ENCODE measurements at regions of chr1 and their contacts with region 1.

Region 1: DNA sequence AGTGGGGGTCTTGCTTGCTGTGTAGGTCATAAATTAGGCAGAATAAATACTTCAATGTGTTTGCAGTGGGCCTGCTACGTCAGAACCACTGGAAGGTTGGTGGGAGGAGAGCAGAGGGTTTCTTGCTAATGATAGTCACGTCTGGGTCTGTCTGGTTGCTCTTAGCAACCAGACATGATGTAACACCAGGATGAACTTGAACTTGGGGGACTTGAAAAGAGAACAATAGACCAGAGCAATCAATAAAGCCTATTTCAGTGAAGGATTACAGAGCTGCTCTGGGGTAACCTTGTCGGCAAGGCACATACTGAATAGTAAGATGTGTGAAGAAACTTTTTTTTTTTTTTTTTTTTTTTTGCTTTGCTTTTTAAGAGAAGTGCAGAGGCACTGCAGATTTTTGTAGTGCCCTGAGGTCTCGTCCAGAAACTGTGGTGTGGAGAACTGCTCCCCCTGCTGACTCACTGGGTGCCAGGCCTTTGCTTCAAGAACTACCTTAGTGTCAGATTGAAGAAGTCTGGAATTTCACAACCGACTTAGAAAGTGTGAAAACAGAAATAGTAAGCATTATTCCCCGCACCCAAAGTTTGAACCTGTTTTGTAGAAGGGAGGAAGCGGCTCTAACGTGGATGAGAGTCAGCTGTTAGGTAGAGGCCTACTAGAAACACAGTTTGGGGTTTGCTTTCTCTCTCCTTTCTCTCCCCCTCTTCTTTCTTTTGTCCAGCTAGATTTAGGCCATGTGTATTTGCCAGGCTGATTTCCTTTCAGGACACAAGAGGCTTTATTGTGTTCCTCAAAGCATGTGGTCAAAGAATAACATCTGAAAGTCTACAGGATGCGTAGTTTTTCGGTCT is 271.6 kb downstream of the TM2D1 start:
- DNase-seq: peak; percentile 93 to 94
- ATAC-seq: peak; percentile 89
- H3K4me3 ChIP-seq: no peak overlapping the region
- H3K27ac ChIP-seq: peak overlapping the region; percentile 95
- H3K4me1 ChIP-seq: peaks cover 3 to 11% of the 10 kb centered on the region in 2 donors
- H3K27me3 ChIP-seq: no peaks in the 10 kb centered on the region

Region 2: DNA sequence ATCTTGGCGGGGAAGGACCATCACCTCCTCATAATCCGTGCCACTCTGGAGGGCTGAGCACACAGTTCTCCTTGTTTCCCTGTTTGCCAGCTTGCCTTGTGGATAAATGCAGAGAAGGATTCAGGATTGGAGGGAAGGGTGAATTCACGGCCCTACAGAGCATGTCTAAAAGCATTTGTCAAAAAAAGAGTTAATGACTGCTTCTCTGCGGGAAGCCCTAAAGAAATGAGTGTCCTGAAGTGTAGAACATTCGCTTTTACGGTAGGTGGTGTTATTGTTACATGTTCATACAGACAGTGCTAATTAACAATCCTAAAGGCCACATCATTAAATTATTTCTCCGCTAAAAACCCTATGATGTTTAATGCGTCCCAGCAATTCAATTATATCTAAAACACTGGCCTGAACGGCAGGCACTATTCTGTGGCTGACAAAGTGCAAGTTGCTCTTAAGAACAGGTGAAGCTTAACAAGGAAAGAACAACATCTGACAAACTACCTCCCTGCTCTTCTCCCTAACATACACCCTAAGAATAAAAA is 483.3 kb before region 1 on chr1:
- intact Hi-C with region 1: loop called in 1 of 2 experiments (anchors 5 kb)
- DNase-seq: no peak
- ATAC-seq: peak; percentile 78
- H3K4me3 ChIP-seq: no peak overlapping the region
- H3K27ac ChIP-seq: peak overlapping the region; percentile 49 to 74
- H3K4me1 ChIP-seq: peaks cover 6 to 12% of the 10 kb centered on the region in 2 donors
- H3K27me3 ChIP-seq: no peaks in the 10 kb centered on the region

Region 3: GRCh38 chr1:61056573-61057439 is 396.5 kb before region 1 on chr1:
- intact Hi-C with region 1: loop called in 1 of 2 experiments (anchors 2 kb)
- DNase-seq: peak; percentile 81
- ATAC-seq: peak; percentile 69
- H3K4me3 ChIP-seq: peak overlapping the region; percentile 58 to 97
- H3K27ac ChIP-seq: peak overlapping the region; percentile 57 to 70
- H3K4me1 ChIP-seq: peaks cover 0 to 11% of the 10 kb centered on the region in 2 donors
- H3K27me3 ChIP-seq: no peaks in the 10 kb centered on the region

Region 4: GRCh38 chr1:61170328-61171238 is 282.8 kb before region 1 on chr1:
- intact Hi-C with region 1: loop called in 1 of 2 experiments (anchors 10 kb)
- DNase-seq: no peak
- ATAC-seq: no peak
- H3K4me3 ChIP-seq: no peak overlapping the region
- H3K27ac ChIP-seq: peak overlapping the region; percentile 79 to 86
- H3K4me1 ChIP-seq: peaks cover 9 to 19% of the 10 kb centered on the region in 2 donors
- H3K27me3 ChIP-seq: no peaks in the 10 kb centered on the region

Region 5: DNA sequence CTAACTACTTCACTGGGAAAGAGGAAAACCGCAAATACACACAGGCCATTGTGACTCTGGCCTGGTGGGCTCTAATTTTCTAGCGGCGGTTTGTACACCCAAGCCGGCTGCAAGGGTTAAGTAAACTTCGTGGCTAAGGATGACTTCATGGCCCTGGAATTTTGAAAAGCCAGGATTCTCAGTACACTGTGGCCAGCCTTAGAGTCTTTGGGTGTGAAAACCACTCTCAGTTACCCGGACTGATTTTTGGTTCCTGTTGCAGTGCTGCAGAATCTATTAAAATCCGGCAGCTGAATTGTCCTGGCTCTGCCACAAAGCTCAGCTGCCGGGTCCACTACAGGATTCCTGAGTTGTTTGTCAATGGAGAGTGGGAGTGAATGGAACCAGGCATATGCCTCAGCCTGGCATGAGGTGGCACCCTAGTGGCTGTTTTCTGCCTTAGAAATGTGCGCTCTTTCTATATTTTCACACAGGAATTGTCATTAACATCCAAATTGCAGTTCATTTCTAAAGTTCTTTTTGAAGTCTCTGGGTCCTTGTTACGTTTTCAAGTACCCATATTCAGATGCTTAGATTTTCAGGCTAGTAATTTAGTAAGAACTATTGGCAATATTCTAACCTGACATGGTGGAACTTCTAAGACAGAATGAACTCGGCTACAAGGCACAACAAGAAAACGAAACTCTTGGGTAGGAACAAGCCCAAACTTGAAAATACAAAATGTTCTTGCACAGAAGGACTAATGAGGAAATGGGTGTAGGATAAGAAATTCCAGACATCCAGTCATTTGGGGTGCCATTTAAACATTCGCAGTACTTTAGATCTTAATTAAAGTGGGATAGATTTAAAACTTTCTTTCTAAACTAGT is 115.1 kb before region 1 on chr1:
- intact Hi-C with region 1: loop called in 1 of 2 experiments (anchors 5 kb)
- DNase-seq: peak; percentile 84
- ATAC-seq: peak; percentile 91
- H3K4me3 ChIP-seq: peak overlapping the region in 1 of 2 donors; percentile 48
- H3K27ac ChIP-seq: peak overlapping the region; percentile 94 to 99
- H3K4me1 ChIP-seq: peaks cover 4% of the 10 kb centered on the region in 2 donors
- H3K27me3 ChIP-seq: no peaks in the 10 kb centered on the region

Region 6: DNA sequence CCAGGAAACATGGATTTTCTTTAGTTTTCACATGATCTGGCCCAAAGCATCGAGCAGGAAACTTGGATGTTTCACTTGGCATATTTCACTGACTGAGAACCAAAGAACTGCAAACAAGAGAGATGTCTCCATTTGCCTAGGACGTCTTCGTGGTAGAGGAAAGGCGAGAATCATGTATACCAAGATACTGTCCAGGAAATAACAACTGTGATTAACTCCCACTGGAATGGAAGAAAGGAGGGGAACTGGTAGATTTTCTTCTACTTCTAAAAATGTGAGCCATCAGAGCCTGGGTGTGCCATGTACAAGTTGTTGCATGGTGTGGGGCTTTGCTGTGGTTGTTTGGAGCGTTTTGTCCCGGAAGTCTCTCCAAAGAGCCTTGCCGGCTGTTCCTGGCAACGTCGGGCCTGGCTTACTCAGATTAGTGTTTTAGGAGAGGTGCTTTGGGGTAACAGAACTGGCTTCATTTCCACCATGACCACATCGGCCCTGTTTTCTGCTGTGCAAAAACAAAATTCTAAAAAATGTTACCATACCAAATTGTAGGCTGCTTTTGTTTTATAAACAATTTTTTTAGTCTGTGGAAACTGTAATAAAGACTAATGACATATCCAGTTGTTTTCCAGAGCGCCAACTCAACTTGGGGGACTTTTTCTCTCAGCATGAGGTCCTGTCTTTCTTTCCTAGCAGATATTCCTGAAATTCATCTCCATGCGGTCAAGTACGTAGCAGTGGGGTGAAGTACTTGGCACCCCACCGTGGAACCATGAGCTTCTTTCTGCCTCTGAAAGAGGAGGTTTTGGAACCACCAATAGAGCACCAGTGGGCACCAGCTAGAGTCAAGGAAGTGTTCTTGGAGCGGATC is 153.3 kb after region 1 on chr1:
- intact Hi-C with region 1: no loop called
- DNase-seq: peak; percentile 87 to 90
- ATAC-seq: peak; percentile 92
- H3K4me3 ChIP-seq: no peak overlapping the region
- H3K27ac ChIP-seq: peak overlapping the region; percentile 94 to 99
- H3K4me1 ChIP-seq: peaks cover 2 to 7% of the 10 kb centered on the region in 2 donors
- H3K27me3 ChIP-seq: no peaks in the 10 kb centered on the region

Region 7: DNA sequence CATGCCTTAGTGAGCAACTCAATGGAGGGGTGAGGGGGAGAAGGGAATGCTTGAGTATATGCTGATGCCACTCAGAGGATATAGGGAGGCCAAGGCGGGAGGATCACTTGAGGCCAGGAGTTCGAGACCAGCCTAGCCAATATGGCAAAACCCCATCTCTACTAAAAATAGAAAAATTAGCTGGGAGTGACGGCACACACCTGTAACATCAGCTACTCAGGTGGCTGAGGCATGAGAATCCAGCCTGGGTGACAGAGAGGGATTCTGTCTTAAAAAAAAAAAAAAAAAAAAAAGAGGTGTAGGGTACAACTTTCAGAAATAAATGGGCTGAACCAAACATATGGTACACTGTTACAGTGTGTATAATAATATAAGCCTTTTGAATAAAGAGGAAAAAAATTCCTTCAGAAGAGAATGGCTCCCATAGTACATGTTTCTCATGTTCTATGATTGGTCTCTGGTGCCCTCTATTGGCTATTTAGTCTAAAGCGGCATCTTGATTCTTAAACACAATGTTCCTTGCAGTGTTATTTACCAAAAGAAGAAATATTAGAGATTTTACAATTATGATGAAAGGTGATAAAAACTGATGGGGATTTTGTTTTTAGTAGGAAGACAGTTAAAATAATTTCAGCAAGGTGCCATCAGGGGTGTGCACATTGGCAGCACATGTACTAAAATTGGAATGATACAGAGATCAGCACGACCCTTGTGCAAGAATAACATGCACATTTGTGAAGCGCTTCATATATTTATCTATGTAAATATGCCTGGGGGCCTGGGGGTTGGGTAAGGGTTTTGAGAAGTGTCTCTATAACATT is 398.7 kb after region 1 on chr1:
- intact Hi-C with region 1: loop called in 1 of 2 experiments (anchors 5 kb)
- DNase-seq: no peak
- ATAC-seq: peak; percentile 81
- H3K4me3 ChIP-seq: no peak overlapping the region
- H3K27ac ChIP-seq: no peak overlapping the region
- H3K4me1 ChIP-seq: no peaks in the 10 kb centered on the region
- H3K27me3 ChIP-seq: no peaks in the 10 kb centered on the region

Region 8: DNA sequence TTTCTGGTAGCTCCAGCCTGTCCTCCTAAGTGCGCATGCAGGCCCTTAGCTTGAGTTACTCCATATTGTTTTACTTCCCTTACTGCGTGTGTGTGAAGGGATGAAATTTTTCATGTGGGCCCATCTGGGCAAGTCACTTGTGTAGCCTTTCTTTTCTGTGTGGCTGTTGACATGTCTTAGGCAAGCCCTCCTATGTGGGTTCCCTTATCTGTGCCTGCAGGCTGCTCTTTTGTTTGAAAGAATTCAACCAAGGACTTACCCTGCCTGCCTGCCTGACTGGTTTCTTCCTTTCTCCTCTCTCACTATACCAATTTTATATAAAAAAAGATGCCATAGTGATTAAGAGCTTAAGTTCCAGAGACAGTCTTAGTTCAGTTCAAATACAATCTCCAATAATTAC is 1579.9 kb after region 1 on chr1:
- intact Hi-C with region 1: no loop called
- DNase-seq: no peak
- ATAC-seq: no peak
- H3K4me3 ChIP-seq: no peak overlapping the region
- H3K27ac ChIP-seq: no peak overlapping the region
- H3K4me1 ChIP-seq: no peaks in the 10 kb centered on the region
- H3K27me3 ChIP-seq: no peaks in the 10 kb centered on the region

Measured in aorta (tissue), 5 donors.